Activated CD4-positive, alpha-beta T cell treated with anti-CD3 and anti-CD28 coated beads for 36 hours (primary cell): ENCODE measurements at regions of chr21 and their contacts with region 1.

Region 1: GRCh38 chr21:33924079-33924765 is 8.6 kb upstream of the ATP5PO start:
- DNase-seq: peak; percentile 96
- ATAC-seq: peak; percentile 94
- H3K4me3 Mint-ChIP-seq: no peak overlapping the region
- H3K27ac Mint-ChIP-seq: peak overlapping the region; percentile 51
- H3K4me1 Mint-ChIP-seq: peaks cover 12% of the 10 kb centered on the region
- H3K27me3 Mint-ChIP-seq: no peaks in the 10 kb centered on the region

Region 2: GRCh38 chr21:33976082-33977016 is 52.1 kb after region 1 on chr21:
- CTCF ChIA-PET with region 1: interaction called, 24 read pairs
- POLR2A ChIA-PET with region 1: interaction called, 5 read pairs
- intact Hi-C with region 1: loop called in 1 of 2 experiments (anchors 2 kb)
- DNase-seq: peak; percentile 80
- ATAC-seq: peak; percentile 57
- H3K4me3 Mint-ChIP-seq: peak overlapping the region; percentile 68
- H3K27ac Mint-ChIP-seq: peak overlapping the region; percentile 96
- H3K4me1 Mint-ChIP-seq: peaks cover 73% of the 10 kb centered on the region
- H3K27me3 Mint-ChIP-seq: no peaks in the 10 kb centered on the region

Region 3: GRCh38 chr21:34091607-34092006 is 167.4 kb after region 1 on chr21:
- CTCF ChIA-PET with region 1: interaction called, 14 read pairs
- POLR2A ChIA-PET with region 1: no interaction called
- intact Hi-C with region 1: no loop called
- DNase-seq: no peak
- ATAC-seq: no peak
- H3K4me3 Mint-ChIP-seq: no peak overlapping the region
- H3K27ac Mint-ChIP-seq: no peak overlapping the region
- H3K4me1 Mint-ChIP-seq: peaks cover 48% of the 10 kb centered on the region
- H3K27me3 Mint-ChIP-seq: no peaks in the 10 kb centered on the region

Region 4: DNA sequence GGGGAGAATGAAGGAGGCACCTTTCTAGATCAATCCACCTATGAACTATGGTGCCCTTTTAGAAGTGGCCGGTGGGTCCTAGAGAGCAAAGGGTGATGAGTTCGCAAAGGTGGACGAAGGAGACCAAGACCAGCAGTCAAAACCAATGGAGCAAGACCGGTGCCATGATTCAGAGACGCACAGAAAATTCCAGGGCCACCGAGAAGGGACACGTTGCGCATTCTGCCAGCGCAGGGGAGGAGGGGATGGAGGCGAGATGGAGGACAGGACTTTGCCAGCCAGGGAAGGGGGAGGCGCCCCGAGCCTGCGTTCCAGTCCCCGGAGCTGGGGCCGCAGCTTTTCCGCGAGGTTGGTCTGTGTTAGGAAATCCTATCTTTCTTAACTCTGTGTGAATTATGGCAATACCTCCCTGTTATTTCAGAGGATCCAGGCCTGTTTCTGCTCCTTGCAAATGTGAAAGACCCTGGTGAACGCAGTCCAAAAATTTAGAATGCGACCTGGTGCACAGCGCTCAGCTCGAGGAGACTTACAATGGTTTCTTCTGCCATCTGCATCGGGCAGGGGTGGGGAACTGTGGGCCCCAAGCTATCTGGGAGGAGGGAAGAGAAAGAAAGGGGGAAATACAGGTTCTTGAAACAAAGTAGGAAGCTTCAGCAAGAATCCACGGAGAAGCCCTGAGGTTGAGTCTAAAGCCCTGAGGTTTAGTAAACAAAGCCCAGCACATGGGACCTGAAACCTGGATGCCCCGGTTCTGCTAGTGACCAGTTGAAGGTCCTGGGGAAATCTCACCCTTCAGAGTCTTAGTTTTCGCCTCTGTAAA is 278.5 kb after region 1 on chr21:
- CTCF ChIA-PET with region 1: interaction called, 13 read pairs
- POLR2A ChIA-PET with region 1: no interaction called
- intact Hi-C with region 1: loop called (anchors 1 to 5 kb)
- DNase-seq: no peak
- ATAC-seq: no peak
- H3K4me3 Mint-ChIP-seq: peak overlapping the region; percentile 70
- H3K27ac Mint-ChIP-seq: no peak overlapping the region
- H3K4me1 Mint-ChIP-seq: peaks cover 40% of the 10 kb centered on the region
- H3K27me3 Mint-ChIP-seq: peaks cover 3% of the 10 kb centered on the region

Region 5: GRCh38 chr21:34345091-34345871 is 421.1 kb after region 1 on chr21:
- CTCF ChIA-PET with region 1: interaction called, 103 read pairs
- POLR2A ChIA-PET with region 1: interaction called, 7 read pairs
- intact Hi-C with region 1: loop called (anchors 1 kb)
- DNase-seq: no peak
- ATAC-seq: no peak
- H3K4me3 Mint-ChIP-seq: no peak overlapping the region
- H3K27ac Mint-ChIP-seq: no peak overlapping the region
- H3K4me1 Mint-ChIP-seq: peaks cover 3% of the 10 kb centered on the region
- H3K27me3 Mint-ChIP-seq: no peaks in the 10 kb centered on the region